ENCODE measurements at regions of chr3 and their contacts with region 1.

Region 1: GRCh38 chr3:130746246-130747039 is at the start of gene PIK3R4:
- DNase-seq: peak; percentile 93 to 94
- H3K4me3 ChIP-seq: peak within 1 kb of the TSS; percentile 91
- H3K27ac ChIP-seq: peak within 1 kb of the TSS; percentile 45
- H3K4me1 ChIP-seq: peaks cover 9% of the 10 kb centered on the region; the same call in 1 of the 2 replicates
- H3K27me3 ChIP-seq: no peaks in the 10 kb centered on the region
- CTCF ChIP-seq: no peak
- total RNA-seq, gene PIK3R4: 28.7 and 35.2 TPM in 2 replicates

Region 2: GRCh38 chr3:130759699-130760338 is 13.4 kb after region 1 on chr3:
- CTCF ChIA-PET with region 1: interaction called, 4 read pairs
- POLR2A ChIA-PET with region 1: interaction called, 11 read pairs
- intact Hi-C with region 1: loop called (anchors 1 kb)
- DNase-seq: peak; percentile 52 to 61
- H3K4me3 ChIP-seq: no peak overlapping the region
- H3K27ac ChIP-seq: no peak overlapping the region
- H3K4me1 ChIP-seq: peaks cover 31% of the 10 kb centered on the region
- H3K27me3 ChIP-seq: no peaks in the 10 kb centered on the region
- CTCF ChIP-seq: peak; percentile 83

Region 3: GRCh38 chr3:130820976-130821375 is 74.5 kb after region 1 on chr3:
- CTCF ChIA-PET with region 1: no interaction called
- POLR2A ChIA-PET with region 1: interaction called, 10 read pairs
- intact Hi-C with region 1: no loop called
- DNase-seq: peak; percentile 46 to 87
- H3K4me3 ChIP-seq: no peak overlapping the region
- H3K27ac ChIP-seq: peak overlapping the region; percentile 45
- H3K4me1 ChIP-seq: peaks cover 10% of the 10 kb centered on the region
- H3K27me3 ChIP-seq: no peaks in the 10 kb centered on the region
- CTCF ChIP-seq: no peak